Activated CD4-positive, alpha-beta T cell treated with anti-CD3 and anti-CD28 coated beads for 36 hours (primary cell): ENCODE measurements at regions of chrX and their contacts with region 1.

Region 1: GRCh38 chrX:26649534-26649933 is 433.6 kb downstream of the MAGEB5 start:
- DNase-seq: no peak
- ATAC-seq: no peak
- H3K4me3 Mint-ChIP-seq: no peak overlapping the region
- H3K27ac Mint-ChIP-seq: no peak overlapping the region
- H3K4me1 Mint-ChIP-seq: no peaks in the 10 kb centered on the region
- H3K27me3 Mint-ChIP-seq: no peaks in the 10 kb centered on the region

Region 2: DNA sequence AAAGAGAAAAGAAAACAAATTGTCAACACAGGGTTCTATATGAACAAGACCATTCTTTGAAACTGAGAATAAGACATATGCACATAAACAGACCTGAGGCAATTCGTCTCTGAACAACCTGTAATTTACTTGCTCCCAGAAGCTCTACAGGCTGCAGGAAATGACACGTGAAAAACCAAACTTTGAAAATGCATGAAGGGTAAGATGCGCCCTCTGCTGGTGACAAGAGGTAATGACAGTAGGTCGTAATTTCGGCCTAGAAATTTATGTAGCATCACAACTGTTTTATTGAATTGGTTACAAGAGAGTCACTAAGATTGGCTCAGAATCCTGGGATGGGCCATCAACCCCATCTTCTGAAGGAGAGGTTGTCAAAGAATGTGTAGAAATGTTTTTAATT is 537.1 kb after region 1 on chrX:
- CTCF ChIA-PET with region 1: no interaction called
- POLR2A ChIA-PET with region 1: no interaction called
- intact Hi-C with region 1: loop called (anchors 1 to 10 kb)
- DNase-seq: peak; percentile 40
- ATAC-seq: no peak
- H3K4me3 Mint-ChIP-seq: no peak overlapping the region
- H3K27ac Mint-ChIP-seq: no peak overlapping the region
- H3K4me1 Mint-ChIP-seq: no peaks in the 10 kb centered on the region
- H3K27me3 Mint-ChIP-seq: no peaks in the 10 kb centered on the region

Region 3: GRCh38 chrX:27336466-27337091 is 687.0 kb after region 1 on chrX:
- CTCF ChIA-PET with region 1: no interaction called
- POLR2A ChIA-PET with region 1: no interaction called
- intact Hi-C with region 1: loop called in 1 of 2 experiments (anchors 2 kb)
- DNase-seq: peak; percentile 55
- ATAC-seq: no peak
- H3K4me3 Mint-ChIP-seq: no peak overlapping the region
- H3K27ac Mint-ChIP-seq: no peak overlapping the region
- H3K4me1 Mint-ChIP-seq: no peaks in the 10 kb centered on the region
- H3K27me3 Mint-ChIP-seq: no peaks in the 10 kb centered on the region